ENCODE measurements at regions of chr2 and their contacts with region 1.

Region 1: DNA sequence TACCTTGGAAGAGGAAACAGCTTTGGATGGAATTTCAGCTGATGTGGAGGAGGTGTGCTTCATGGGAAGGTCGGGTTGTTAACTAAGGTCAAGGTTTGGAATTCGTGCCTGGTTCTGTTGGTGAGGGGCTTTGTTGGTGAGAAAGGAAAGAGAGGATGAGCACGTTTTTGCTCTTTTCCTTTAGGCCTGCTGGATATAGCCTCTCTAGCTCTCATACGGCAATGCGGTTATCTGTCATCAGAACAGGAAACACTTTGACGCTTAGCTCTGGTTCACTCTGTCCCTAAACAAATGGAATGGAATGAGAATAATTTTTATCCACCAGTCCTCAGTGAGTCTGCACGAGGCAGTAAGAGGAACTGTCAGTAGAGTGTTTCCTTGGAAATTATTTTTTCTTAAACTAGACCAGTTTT is 169.7 kb upstream of the NOSTRIN start:
- DNase-seq: no peak
- ATAC-seq: no peak
- H3K4me3 ChIP-seq: no peak overlapping the region
- H3K27ac ChIP-seq: no peak overlapping the region
- H3K4me1 ChIP-seq: no peaks in the 10 kb centered on the region
- H3K27me3 ChIP-seq: no peaks in the 10 kb centered on the region
- CTCF ChIP-seq: no peak

Region 2: DNA sequence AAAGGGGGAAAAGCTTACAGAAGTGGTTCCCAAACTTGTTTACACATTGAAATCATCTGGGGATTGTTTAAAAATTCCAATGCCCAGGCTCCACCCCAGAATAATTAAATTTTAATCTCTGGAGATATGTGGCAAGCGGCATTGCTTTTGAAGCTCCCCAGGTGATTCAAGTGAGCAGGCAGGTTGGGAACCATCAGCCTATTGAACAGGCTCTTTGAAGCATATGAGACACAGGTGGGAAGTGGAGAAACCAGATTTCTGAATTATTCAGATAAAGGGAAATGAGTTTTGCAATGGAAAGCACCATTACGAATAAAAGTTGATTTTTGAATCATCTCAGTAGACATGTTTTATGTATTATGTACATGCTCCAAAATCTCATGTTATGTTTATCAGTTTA is 112.1 kb after region 1 on chr2:
- CTCF ChIA-PET with region 1: no interaction called
- POLR2A ChIA-PET with region 1: interaction called, 10 read pairs
- in situ Hi-C with region 1: no loop called
- intact Hi-C with region 1: no loop called
- DNase-seq: no peak
- ATAC-seq: no peak
- H3K4me3 ChIP-seq: no peak overlapping the region
- H3K27ac ChIP-seq: no peak overlapping the region
- H3K4me1 ChIP-seq: no peaks in the 10 kb centered on the region
- H3K27me3 ChIP-seq: no peaks in the 10 kb centered on the region
- CTCF ChIP-seq: no peak

Region 3: DNA sequence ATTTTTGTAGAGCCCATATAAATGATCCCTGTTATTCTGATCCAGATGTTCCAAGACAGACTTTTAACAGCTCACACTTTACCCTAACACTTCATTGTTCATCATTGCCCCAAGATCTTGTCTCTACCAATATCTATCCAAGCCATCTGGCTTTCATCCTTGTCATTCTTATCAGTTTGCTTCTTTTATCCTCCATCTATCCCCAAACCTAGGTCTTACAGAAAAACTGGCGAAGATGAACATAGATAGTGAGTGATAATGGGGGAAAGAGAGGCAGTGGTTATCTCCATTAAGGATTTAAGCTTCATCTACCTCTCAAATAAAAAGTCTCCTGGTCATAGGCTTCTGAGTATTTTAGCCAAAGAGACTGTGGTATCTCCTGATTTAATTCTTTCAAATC is 526.2 kb after region 1 on chr2:
- CTCF ChIA-PET with region 1: no interaction called
- POLR2A ChIA-PET with region 1: no interaction called
- in situ Hi-C with region 1: no loop called
- intact Hi-C with region 1: no loop called
- DNase-seq: no peak
- ATAC-seq: no peak
- H3K4me3 ChIP-seq: no peak overlapping the region
- H3K27ac ChIP-seq: no peak overlapping the region
- H3K4me1 ChIP-seq: no peaks in the 10 kb centered on the region
- H3K27me3 ChIP-seq: peaks cover 3% of the 10 kb centered on the region; the same call in 1 of the 2 replicates
- CTCF ChIP-seq: no peak

Measured in Panc1 (cell line).